OCI-LY7 (cell line): ENCODE measurements at regions of chr3 and their contacts with region 1.

Region 1: GRCh38 chr3:193897288-193897687 is 238.7 kb upstream of the HES1 start:
- DNase-seq: no peak
- H3K4me3 ChIP-seq: no peak overlapping the region
- H3K27ac ChIP-seq: no peak overlapping the region
- H3K4me1 ChIP-seq: no peaks in the 10 kb centered on the region
- CTCF ChIP-seq: no peak

Region 2: DNA sequence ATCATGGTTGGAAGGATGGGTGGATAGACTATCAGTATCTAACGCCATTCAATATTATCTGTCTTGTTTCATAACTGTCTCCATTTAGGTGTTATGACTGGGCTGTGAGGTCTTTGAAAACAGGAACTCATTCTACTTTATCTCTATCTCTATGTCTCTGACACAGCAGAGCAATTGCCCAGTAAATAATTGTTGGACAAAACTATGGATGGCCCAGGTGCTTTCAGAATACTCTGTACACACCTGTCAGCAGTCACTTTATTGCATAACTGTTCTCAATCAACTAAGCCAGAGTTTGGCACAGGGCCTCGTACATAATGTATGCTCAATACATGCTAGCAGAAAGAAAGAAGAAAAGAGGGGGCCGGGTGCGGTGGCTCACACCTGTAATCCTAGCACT is 94.0 kb before region 1 on chr3:
- CTCF ChIA-PET with region 1: no interaction called
- POLR2A ChIA-PET with region 1: no interaction called
- intact Hi-C with region 1: loop called (anchors 5 kb)
- DNase-seq: no peak
- H3K4me3 ChIP-seq: no peak overlapping the region
- H3K27ac ChIP-seq: no peak overlapping the region
- H3K4me1 ChIP-seq: no peaks in the 10 kb centered on the region
- CTCF ChIP-seq: no peak

Region 3: DNA sequence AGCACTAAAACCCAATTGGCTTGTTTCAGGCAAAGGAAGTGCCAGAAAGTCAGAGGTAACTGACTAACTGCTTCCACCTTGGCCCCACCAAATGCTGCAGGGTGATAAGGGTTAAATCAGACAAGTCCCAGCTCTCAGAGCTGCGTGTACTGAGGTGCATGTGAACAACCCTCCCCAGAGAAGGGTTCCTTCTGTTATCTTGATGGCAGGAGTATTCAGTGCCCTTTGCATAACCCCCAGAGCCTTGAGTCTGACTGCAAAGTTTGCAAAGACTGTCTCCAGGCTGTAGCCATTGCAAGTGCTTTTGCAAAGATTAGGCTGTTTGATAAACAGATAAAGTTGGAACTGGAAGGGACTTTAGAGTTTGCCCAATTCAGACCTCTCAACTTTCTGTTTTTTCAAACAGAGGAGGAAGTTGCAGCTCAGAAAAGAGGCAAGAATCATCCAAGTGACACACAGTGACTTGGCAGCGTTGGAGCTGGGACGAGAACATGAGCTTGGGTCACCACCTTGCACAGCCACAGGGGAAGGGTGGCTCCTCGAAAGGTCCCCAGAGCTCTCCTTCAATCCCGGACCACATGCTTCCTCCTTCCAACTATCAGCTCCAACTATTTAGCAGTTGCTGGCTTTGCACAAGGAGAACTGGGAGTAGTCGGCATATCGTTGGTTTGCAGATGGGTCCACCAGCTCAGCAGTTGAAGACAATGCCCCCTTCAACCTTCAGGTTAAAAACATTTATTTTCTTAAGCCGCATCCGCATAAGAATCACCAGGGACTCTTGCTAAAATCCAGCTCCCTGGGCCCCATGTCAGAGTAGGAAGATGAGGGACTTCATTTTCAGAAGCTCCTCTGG is 13.8 kb after region 1 on chr3:
- CTCF ChIA-PET with region 1: no interaction called
- POLR2A ChIA-PET with region 1: no interaction called
- intact Hi-C with region 1: no loop called
- DNase-seq: no peak
- H3K4me3 ChIP-seq: no peak overlapping the region
- H3K27ac ChIP-seq: no peak overlapping the region
- H3K4me1 ChIP-seq: no peaks in the 10 kb centered on the region
- CTCF ChIP-seq: no peak

Region 4: DNA sequence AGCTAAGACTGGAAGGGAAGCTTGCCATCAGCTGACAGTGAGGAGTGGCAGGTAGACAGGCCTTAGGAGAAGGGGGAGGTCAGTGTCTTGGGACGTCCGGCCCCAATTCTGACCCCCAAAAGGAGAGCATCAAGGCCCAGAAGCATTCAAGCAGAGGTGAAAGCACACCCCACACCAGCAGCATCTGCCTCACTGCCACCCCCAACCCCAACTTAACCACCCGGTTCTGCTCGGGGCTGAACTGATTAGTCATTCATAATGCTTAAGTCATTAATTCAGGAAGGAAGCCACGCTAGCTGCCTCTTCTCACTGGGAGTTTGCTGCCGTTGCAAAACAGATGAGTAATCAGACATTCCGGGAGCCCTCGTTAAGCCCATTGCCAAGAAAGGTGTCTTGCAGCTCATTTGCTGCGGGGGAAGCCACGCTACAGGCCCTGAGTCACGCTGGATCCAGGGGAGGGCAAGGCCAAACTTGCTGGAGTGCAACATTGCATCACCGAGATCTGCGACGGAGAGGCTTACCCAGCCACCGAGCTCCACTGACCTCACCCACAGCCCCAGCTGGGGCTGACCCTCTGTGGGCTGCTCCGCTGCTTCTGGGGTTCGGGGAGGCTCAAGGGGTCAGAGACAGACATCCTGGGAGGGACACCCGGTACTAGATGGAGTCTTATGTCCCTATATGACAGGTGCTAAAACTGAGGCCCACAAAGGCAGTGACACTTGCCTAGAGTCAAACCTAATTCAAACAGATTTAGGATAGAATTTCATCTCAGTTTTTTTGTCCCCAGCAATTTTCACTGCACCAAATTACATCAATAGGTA is 192.3 kb after region 1 on chr3:
- CTCF ChIA-PET with region 1: no interaction called
- POLR2A ChIA-PET with region 1: no interaction called
- intact Hi-C with region 1: no loop called
- DNase-seq: no peak
- H3K4me3 ChIP-seq: no peak overlapping the region
- H3K27ac ChIP-seq: no peak overlapping the region
- H3K4me1 ChIP-seq: peaks cover 57% of the 10 kb centered on the region
- CTCF ChIP-seq: no peak